Activated naive CD4-positive, alpha-beta T cell treated with anti-CD3 and anti-CD28 coated beads for 36 hours (primary cell): ENCODE measurements at regions of chr19 and their contacts with region 1.

Region 1: DNA sequence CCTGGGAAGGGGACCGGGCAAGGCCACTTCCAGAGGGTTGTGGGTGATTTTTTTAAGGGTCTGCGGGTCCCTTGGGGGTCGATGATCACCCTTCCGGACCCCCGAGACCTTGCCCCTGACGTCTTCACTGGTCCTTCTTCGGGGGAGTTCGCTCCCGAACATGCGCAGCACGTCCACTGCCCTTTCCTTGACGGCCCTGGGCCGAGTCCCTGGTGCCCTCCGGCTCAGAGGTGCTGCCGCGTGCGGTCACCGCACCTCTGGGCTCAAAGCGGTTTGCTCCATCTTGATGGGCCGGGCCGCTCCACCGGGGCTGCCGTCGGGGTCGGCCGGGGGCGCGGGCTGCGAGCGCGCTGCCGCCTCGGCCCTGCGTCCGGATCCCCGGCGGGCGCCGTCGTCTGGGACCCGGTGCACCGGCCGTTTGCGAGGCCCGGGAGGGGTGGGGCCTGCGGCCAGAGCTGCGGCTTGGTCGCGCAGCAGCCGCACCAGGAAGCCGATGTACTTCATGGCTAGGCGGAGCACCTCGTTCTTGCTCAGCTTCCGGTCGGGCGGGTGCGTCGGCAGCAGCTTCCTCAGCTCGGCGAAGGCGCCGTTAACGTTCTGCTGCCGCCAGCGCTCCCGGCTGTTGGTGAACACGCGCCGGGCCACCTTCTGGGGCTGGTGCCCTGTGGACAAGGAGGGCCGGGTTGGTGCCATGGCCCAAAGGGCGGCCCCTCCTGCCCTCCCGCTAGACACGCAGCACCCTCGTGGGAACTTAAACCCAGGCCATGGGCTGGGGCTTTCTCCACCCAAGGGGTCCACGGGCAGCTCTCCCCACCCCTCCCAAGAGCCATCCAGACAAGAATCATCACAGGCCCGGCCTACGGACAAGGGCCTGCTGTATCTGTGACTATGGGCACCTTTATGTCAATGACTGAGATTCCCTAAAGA is 3.3 kb downstream of the LYL1 start:
- DNase-seq: peak; percentile 84
- H3K4me3 Mint-ChIP-seq: peak overlapping the region; percentile 72
- H3K27ac Mint-ChIP-seq: peak overlapping the region; percentile 80
- H3K4me1 Mint-ChIP-seq: peaks cover 51% of the 10 kb centered on the region
- H3K27me3 Mint-ChIP-seq: peaks cover 31% of the 10 kb centered on the region

Region 2: DNA sequence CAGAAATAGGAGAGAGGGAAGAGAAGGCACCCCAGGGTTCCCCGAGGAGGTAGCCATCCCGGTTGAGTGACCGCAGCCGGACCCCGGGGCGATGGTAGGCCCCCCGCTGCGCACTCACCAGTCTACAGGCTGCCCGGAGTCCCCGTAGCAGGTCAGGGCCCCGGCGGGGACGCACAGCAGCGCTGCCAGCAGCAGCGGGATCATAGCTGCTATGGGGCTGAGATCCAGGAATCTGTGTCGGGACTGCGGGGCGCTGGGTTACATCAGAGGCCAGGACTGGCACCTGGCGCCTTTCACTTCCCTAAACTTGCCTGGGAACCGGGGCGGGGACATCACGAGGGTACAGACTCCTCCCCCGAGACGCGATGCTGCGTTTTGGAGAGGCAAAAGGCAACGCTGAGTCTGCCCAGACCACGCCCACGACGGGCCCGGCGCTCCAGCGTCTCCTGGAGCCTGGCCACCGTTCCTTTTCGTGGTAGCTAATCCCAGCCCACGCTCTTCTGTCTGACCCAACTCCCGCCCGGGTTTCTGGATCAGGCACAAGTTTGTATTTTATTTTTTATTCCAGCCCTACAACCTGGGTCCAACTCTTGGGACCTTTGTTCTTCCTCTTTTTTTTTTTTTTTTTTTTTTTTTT is 218.0 kb before region 1 on chr19 and contains the start of gene DNASE2:
- CTCF ChIA-PET with region 1: interaction called, 3 read pairs
- intact Hi-C with region 1: loop called (anchors 5 kb)
- DNase-seq: peak; percentile 97
- H3K4me3 Mint-ChIP-seq: peak within 1 kb of the TSS; percentile 88
- H3K27ac Mint-ChIP-seq: peak within 1 kb of the TSS; percentile 76
- H3K4me1 Mint-ChIP-seq: peaks cover 28% of the 10 kb centered on the region
- H3K27me3 Mint-ChIP-seq: no peaks in the 10 kb centered on the region
- total RNA-seq, gene DNASE2: 30.9 to 31.6 TPM

Region 3: DNA sequence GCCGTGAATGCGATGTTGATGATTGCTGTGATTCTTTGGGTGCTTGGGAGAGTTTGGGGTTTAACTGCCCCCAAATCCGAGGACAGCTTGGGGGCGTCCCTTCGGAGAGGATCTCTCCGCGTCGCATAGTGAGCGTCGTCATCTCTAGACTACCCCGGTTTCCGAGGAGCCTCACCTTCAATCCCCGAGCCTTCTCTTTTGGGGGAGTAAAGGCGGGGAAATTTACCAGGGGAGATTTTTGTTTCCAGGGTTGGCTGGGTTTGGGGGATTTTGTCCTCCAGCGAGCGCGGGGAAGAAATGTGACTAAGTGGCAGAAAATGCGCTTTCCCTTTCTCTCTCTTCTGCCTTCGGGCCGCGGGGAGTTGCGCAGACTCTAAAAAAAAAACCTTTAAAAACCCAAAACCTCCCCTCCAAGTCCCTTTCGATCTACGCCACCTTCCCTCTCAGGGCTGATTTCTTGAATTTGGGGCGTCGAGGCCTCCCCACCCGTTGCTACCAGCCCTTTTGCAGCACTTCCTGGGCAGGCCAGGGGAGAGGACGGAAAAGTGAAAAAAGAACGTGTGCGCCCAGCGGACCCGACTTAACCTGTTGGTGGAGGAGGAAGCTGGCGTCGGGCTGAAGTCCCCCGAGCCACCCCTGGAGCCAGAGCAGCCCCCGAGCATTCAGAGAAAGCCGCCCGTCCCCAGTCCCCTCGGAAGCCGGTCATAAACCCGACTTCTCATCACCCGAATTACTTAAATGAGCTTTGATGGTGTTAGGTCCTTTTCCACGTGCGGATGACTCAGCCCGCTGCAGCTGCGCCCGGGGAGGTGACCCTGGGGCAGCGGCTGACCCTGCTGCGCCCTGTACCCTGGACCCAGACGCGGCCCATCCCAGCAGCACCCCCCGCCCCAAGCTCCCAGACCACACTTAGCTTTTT is 86.4 kb before region 1 on chr19:
- CTCF ChIA-PET with region 1: interaction called, 9 read pairs
- intact Hi-C with region 1: loop called (anchors 1 kb)
- DNase-seq: peak; percentile 83
- H3K4me3 Mint-ChIP-seq: peak overlapping the region; percentile 73
- H3K27ac Mint-ChIP-seq: peak overlapping the region; percentile 83
- H3K4me1 Mint-ChIP-seq: peaks cover 22% of the 10 kb centered on the region
- H3K27me3 Mint-ChIP-seq: peaks cover 40% of the 10 kb centered on the region

Region 4: GRCh38 chr19:13082192-13083007 is 16.9 kb before region 1 on chr19:
- CTCF ChIA-PET with region 1: no interaction called
- intact Hi-C with region 1: no loop called
- DNase-seq: no peak
- H3K4me3 Mint-ChIP-seq: no peak overlapping the region
- H3K27ac Mint-ChIP-seq: no peak overlapping the region
- H3K4me1 Mint-ChIP-seq: peaks cover 2% of the 10 kb centered on the region
- H3K27me3 Mint-ChIP-seq: no peaks in the 10 kb centered on the region

Region 5: DNA sequence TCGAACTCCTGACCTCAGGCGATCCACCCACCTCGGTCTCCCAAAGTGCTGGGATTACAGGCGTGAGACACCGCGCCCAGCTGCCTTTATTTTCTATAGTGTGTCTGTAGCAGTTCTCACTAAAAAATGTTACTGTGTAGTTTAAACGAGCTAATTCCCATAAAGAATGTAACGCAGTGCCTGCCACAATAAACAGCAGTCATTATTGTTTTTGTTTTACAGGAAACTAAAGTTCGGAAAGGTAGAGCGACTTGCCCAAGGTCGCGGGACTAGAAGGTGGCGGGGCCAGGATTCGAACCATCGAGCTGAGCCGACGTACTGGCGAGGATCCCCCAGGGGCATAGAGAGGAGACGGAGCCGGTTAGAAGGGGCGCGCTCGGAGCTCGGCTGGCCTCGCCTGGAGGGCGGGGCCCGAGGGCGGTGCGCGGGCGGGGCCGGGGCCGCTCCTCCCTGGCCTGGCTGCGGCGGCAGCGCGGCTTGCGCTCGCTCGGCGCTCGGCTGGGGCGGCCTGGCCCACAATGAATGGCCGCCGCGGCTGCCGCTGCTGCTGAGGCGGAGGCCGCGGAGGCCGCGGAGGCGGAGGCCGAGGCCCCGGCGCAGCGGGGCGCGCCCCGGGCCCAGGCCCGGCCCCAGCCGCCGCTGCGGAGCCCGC is 18.6 kb after region 1 on chr19 and contains the start of gene NACC1:
- CTCF ChIA-PET with region 1: interaction called, 24 read pairs
- intact Hi-C with region 1: loop called (anchors 1 kb)
- DNase-seq: peak; percentile 89
- H3K4me3 Mint-ChIP-seq: peak within 1 kb of the TSS; percentile 97
- H3K27ac Mint-ChIP-seq: peak within 1 kb of the TSS; percentile 91
- H3K4me1 Mint-ChIP-seq: peaks cover 49% of the 10 kb centered on the region
- H3K27me3 Mint-ChIP-seq: no peaks in the 10 kb centered on the region
- total RNA-seq, gene NACC1: 41.3 to 45.0 TPM

Region 6: GRCh38 chr19:13143135-13143534 is 43.8 kb after region 1 on chr19:
- CTCF ChIA-PET with region 1: no interaction called
- intact Hi-C with region 1: no loop called
- DNase-seq: no peak
- H3K4me3 Mint-ChIP-seq: no peak overlapping the region
- H3K27ac Mint-ChIP-seq: no peak overlapping the region
- H3K4me1 Mint-ChIP-seq: peaks cover 4% of the 10 kb centered on the region
- H3K27me3 Mint-ChIP-seq: no peaks in the 10 kb centered on the region

Region 7: GRCh38 chr19:13155472-13156359 is 56.4 kb after region 1 on chr19:
- CTCF ChIA-PET with region 1: interaction called, 3 read pairs
- intact Hi-C with region 1: loop called (anchors 2 kb)
- DNase-seq: peak; percentile 86
- H3K4me3 Mint-ChIP-seq: peak overlapping the region; percentile 99
- H3K27ac Mint-ChIP-seq: peak overlapping the region; percentile 100
- H3K4me1 Mint-ChIP-seq: peaks cover 40% of the 10 kb centered on the region
- H3K27me3 Mint-ChIP-seq: no peaks in the 10 kb centered on the region

Region 8: GRCh38 chr19:13212759-13213330 is 113.5 kb after region 1 on chr19:
- CTCF ChIA-PET with region 1: interaction called, 3 read pairs
- intact Hi-C with region 1: loop called (anchors 2 kb)
- DNase-seq: peak; percentile 89
- H3K4me3 Mint-ChIP-seq: no peak overlapping the region
- H3K27ac Mint-ChIP-seq: no peak overlapping the region
- H3K4me1 Mint-ChIP-seq: peaks cover 33% of the 10 kb centered on the region
- H3K27me3 Mint-ChIP-seq: no peaks in the 10 kb centered on the region

Region 9: DNA sequence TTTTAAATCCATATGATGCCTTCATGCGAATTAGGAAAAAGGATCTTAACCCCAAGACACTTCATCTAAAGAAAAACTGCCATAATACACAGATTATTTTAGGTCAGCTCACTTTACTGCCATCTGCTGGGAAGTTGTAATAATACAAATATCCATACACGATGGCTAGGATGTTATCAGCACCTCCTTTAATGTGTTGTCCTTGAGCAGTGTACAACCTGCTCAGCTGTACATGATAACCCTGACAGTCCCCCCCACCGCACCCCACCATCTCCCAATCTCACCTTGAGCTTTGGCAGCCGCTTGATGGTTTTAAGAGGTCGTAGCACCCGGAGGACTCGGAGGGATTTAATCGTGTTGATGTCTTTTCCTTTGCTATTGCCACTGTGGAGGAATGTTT is 163.1 kb after region 1 on chr19:
- CTCF ChIA-PET with region 1: no interaction called
- intact Hi-C with region 1: loop called (anchors 1 kb)
- DNase-seq: no peak
- H3K4me3 Mint-ChIP-seq: no peak overlapping the region
- H3K27ac Mint-ChIP-seq: no peak overlapping the region
- H3K4me1 Mint-ChIP-seq: peaks cover 15% of the 10 kb centered on the region
- H3K27me3 Mint-ChIP-seq: peaks cover 9% of the 10 kb centered on the region